GM10248 (cell line): ENCODE measurements at regions of chr1 and their contacts with region 1.

Region 1: DNA sequence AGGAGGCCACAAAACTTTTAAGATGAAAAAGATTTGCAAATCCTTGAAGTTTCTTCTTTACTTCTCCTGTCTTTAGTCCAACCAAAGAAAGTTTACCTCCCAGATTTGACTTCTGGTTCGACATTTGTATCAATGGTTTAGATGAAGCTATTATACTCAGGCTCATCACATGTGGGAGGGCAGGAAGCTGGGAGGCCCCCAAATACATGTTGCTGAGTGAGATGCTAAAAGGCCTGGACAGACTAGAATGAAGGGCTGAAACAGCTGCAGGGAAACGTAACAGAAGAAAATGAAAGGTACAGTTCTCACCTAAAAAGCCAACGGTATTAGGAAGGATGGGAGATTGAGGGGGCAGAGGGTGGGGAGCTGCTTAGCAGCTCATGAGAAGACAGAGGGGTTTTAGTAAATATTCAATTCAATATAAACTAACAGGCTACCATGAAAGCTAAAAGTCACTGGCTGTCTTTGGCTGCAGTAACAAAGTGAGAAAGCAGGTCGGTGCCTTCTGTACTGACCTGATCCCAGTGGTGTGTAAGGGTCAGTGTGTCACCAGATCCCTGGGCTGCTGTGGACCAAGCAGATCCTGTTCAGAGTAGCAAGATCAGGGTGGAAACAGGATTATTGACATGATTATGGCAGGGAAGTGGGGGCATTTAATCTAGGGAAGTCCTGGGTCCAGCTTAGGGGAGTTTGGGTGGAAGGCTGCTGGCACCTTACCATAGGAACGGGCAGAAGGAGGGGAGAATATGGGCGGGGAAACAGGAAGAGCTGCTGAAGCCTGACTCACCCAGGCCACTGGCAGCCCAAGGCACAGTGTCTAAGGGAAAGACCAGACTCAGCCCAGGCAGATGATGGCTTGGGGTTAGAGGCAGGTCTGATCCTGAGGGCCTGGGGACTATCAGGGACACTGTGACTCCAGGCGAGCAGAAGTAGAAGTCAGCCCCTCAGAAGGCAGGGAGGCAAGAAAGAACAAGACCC is 60.4 kb downstream of the KCNN3 start:
- DNase-seq: no peak
- CTCF ChIP-seq: no peak

Region 2: DNA sequence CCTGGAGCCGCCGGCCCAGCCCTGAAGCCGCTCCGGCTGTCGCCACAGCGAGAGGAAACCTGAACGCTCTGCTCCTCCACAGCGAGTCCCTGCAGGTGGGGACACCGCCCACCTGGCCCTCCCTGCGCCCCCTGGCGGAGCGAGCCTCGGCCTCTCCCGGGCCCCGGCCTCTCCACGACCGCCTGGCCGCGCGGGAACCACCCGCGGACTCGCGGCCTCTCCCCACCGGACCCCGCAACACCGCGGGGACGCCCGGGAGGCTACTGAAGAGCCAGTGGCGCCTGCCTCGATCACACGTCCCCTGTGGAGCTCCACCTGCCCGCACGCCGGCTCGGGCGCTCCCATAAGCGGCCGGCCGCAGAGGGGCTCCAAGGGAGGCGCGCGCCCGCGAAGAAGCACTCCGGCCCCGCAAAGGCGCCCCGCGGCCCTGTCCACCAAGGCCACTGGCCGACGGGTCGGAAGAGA is 49.2 kb before region 1 on chr1:
- CTCF ChIA-PET with region 1: interaction called, 15 read pairs
- POLR2A ChIA-PET with region 1: no interaction called
- DNase-seq: peak; percentile 88
- CTCF ChIP-seq: peak; percentile 85

Region 3: GRCh38 chr1:154791292-154792166 is 18.2 kb before region 1 on chr1:
- CTCF ChIA-PET with region 1: interaction called, 24 read pairs
- POLR2A ChIA-PET with region 1: interaction called, 12 read pairs
- DNase-seq: peak; percentile 88
- CTCF ChIP-seq: peak; percentile 45

Region 4: DNA sequence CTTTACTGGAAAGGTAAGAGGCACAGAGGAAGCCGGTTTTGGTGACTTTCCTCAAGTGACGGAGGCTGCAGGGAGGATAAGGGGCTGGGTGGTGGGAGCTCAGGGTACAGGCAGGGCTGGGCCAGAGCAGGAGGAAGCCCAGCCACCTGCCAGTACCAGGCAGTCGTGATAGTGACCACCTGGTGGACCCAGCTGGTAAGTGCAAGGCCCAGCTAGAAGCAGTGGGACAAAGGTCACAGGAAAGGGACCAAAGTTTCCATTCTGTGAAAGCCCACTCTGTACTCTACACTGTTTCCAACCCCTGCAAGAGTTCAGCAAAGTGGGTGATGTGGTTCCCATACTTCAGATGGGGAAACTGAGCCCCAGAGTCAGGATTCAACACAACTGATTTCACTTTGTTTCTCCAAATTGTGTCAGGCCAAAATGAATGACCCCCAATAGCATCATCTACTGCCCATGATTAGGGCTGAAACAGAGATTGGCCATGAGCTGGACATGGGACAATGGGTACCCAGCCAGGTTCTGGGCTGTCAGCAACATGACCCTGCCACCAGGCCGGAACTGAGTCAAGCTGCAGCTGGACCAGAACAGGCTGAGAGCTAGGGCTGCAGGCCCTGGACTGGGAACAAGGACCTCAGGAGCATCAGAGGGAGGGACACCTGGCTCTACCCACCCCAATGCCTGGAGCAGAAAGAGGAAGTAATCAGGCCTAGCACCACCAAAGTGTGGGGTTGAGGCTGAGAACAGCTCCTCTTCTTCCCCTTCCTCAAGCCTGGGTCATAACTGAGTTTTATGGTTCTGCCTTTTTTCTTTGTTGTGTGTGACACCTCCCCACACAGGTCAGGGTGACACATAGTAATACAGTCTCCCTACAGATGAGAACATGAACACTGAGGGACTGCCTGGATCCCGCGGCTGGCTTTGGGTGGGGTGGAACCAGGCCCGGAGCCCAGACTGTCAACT is 10.2 kb after region 1 on chr1:
- CTCF ChIA-PET with region 1: interaction called, 14 read pairs
- POLR2A ChIA-PET with region 1: no interaction called
- DNase-seq: peak; percentile 55
- CTCF ChIP-seq: no peak